ENCODE measurements at regions of chr5 and their contacts with region 1.

Region 1: GRCh38 chr5:149406203-149406978 is 27.3 kb upstream of the IL17B start:
- DNase-seq: no peak
- H3K4me3 ChIP-seq: peak overlapping the region; percentile 46 to 57
- H3K27ac ChIP-seq: peak overlapping the region; percentile 84
- H3K4me1 ChIP-seq: peaks cover 42% of the 10 kb centered on the region
- H3K27me3 ChIP-seq: no peaks in the 10 kb centered on the region
- CTCF ChIP-seq: no peak
- POLR2A ChIP-seq: peak; percentile 21 to 83

Region 2: GRCh38 chr5:149387081-149387631 is 19.2 kb before region 1 on chr5:
- intact Hi-C with region 1: loop called (anchors 2 kb)
- DNase-seq: no peak
- H3K4me3 ChIP-seq: peak overlapping the region in 1 of 2 donors; percentile 11
- H3K27ac ChIP-seq: peak overlapping the region; percentile 91
- H3K4me1 ChIP-seq: peaks cover 69% of the 10 kb centered on the region
- H3K27me3 ChIP-seq: no peaks in the 10 kb centered on the region
- CTCF ChIP-seq: no peak
- POLR2A ChIP-seq: no peak

Region 3: DNA sequence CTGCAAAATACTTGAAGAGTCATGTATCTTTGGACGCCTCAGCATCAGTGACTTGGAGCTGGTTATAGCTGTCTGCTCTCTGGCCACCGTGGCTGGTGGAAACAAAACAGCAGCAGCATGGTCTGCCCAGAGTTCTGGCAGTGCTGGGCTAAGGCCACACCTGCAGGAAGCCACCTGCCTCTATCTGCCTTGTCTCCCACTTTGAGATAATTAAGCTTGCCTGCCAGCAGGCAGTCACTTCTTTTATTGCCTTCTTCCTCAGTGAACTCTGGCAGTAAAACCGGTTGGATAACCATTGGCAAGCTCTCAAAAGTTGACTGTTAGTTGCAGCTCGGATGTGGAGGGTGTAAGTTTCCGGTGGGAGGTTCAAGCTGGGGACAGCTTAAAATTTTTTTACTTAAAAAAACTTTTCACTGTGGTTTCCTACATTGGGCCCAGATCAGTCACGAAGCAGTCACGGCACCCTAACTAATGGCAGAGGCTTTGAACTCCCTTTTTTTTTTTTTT is 1377.1 kb after region 1 on chr5:
- intact Hi-C with region 1: loop called (anchors 10 kb)
- DNase-seq: peak in 1 of 2 donors; percentile 93
- H3K4me3 ChIP-seq: no peak overlapping the region
- H3K27ac ChIP-seq: peak overlapping the region; percentile 86
- H3K4me1 ChIP-seq: peaks cover 64% of the 10 kb centered on the region
- H3K27me3 ChIP-seq: no peaks in the 10 kb centered on the region
- CTCF ChIP-seq: no peak
- POLR2A ChIP-seq: no peak